ENCODE measurements at regions of chr2 and their contacts with region 1.

Region 1: DNA sequence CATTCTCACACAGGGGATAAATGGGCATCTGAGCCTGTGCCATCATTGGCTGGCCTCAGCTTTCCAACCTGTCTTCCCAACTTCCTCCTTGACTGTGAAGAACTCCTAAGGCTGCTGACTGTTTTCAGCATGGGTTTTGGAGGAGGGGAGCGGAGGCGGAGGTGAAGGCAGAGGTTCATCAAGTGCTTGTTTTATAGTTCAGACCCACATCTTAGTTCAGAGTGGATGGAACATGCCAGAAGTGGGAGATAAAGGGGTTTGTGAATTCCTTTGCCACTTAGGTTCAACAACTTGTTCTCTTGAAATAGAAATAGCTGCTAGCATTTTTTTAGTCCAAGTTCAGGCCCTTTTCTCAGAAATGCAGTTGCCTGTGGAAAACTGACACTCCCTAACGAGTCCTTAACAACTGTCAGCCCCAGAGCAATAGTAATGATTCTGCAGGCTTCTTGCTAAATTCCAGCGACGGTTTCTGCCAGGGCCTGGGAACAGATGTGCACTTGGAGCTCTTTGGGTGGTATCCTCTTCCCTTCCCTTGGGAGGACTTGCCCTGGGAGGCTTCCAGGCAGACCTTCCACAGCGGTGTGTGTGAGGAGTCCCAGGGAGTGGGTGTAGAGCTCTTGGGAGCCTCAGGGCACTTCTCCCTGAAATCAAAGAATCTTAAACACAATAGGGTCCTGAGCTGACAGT is 30.1 kb upstream of the ITGA6 start:
- DNase-seq: no peak
- H3K4me3 ChIP-seq: no peak overlapping the region
- H3K27ac ChIP-seq: no peak overlapping the region
- H3K4me1 ChIP-seq: peaks cover 6 to 45% (median 36%) of the 10 kb centered on the region in 4 experiments
- H3K27me3 ChIP-seq: no peaks in the 10 kb centered on the region

Region 2: GRCh38 chr2:172137943-172138342 is 259.3 kb before region 1 on chr2:
- CTCF ChIA-PET with region 1: no interaction called
- POLR2A ChIA-PET with region 1: no interaction called
- DNase-seq: no peak
- H3K4me3 ChIP-seq: no peak overlapping the region
- H3K27ac ChIP-seq: no peak overlapping the region
- H3K4me1 ChIP-seq: no peaks in the 10 kb centered on the region
- H3K27me3 ChIP-seq: no peaks in the 10 kb centered on the region

Region 3: DNA sequence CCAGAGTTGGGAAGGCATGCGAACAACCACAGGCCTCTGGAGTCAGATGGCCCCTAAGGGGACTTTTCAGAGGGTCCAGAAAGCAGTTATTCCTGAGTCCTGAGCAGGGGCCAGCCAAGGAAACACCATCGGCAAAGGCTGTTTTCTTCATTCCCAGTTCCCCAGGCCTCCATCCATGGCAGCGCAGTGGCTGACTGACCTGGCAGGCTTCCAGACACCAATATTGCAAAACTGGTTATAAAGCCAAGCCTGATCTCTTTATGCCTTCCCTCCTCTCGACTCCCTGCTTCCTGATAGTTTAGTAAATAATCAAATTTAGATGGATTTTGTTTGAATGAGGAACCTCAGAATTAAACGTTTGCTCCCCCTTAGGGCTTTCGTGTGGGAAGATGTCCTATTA is 103.3 kb before region 1 on chr2:
- CTCF ChIA-PET with region 1: no interaction called
- POLR2A ChIA-PET with region 1: no interaction called
- DNase-seq: peak in 2 of 3 donors; percentile 30 to 32
- H3K4me3 ChIP-seq: no peak overlapping the region
- H3K27ac ChIP-seq: no peak overlapping the region
- H3K4me1 ChIP-seq: peaks cover 0 to 29% (median 15%) of the 10 kb centered on the region in 4 experiments
- H3K27me3 ChIP-seq: no peaks in the 10 kb centered on the region

Region 4: DNA sequence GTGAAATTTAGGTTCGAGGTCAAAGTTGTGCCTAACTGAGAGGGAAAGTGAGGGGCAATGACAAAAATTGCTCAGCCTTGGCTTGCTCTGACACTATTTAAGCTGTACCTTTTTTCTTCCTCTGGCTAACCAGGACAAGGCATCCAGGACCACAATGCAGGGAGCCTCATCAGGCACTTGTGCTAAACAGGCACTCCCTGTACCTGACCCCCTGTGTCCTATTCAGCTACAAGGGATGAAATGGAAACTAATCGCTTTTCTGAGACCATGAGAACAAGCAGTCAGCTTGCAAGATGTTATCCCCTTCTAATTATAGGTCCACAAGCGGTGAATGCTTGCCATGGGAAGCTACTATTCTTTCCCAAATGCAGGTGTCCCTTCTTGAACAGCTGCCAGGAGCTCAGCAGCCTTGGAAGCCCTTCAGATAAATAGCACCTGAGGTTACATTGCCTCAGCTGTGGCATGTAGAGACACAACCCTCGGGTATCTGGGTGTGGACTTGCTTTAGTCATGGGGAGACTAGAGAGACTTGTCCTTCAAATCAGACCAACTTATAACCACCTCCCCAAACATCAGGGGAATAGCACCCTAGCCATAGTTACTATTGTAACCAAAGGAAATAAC is 11.0 kb after region 1 on chr2:
- CTCF ChIA-PET with region 1: interaction called, 11 read pairs
- POLR2A ChIA-PET with region 1: no interaction called
- DNase-seq: no peak
- H3K4me3 ChIP-seq: no peak overlapping the region
- H3K27ac ChIP-seq: no peak overlapping the region
- H3K4me1 ChIP-seq: no peaks in the 10 kb centered on the region
- H3K27me3 ChIP-seq: no peaks in the 10 kb centered on the region